ENCODE measurements at regions of chr3 and their contacts with region 1.

Region 1: DNA sequence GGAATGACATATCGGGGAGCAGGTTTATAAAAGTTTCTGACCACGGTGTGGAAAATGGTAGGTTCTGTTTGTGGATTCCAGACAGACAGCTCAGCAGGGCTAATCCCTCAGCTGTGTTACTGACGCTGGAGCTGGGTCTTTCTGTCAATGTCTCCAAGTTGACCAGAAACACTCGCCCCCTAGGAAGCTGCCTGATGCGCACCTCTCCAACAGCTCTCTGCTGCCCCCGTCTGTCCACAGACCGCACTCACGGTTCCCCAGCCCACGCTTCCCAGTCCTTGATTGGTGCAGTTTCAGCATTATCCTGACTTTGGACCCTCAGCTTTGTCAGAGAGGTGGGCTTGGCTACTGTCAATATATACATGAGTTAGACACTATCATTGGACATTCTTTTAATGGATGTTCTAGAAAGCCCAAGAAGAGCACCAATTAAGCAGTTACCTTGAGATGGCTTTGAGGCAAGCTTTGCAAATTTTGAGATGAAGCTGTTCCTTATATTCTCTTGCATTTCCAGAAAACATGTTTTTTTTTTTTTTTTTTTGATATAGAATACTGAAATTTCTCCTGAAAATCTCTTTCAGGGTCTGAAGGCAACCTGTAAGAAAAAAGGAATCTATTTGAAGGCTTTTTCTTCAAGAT is 98.9 kb upstream of the TBC1D5 start:
- DNase-seq: peak; percentile 82
- H3K4me3 Mint-ChIP-seq: no peak overlapping the region
- H3K27ac Mint-ChIP-seq: no peak overlapping the region
- H3K4me1 Mint-ChIP-seq: no peaks in the 10 kb centered on the region
- H3K27me3 Mint-ChIP-seq: peaks cover 4% of the 10 kb centered on the region

Region 2: GRCh38 chr3:16600780-16601539 is 1240.3 kb before region 1 on chr3:
- CTCF ChIA-PET with region 1: interaction called, 8 read pairs
- POLR2A ChIA-PET with region 1: no interaction called
- intact Hi-C with region 1: loop called (anchors 10 kb)
- DNase-seq: peak; percentile 81
- H3K4me3 Mint-ChIP-seq: no peak overlapping the region
- H3K27ac Mint-ChIP-seq: no peak overlapping the region
- H3K4me1 Mint-ChIP-seq: peaks cover 24% of the 10 kb centered on the region
- H3K27me3 Mint-ChIP-seq: peaks cover 10% of the 10 kb centered on the region

Region 3: DNA sequence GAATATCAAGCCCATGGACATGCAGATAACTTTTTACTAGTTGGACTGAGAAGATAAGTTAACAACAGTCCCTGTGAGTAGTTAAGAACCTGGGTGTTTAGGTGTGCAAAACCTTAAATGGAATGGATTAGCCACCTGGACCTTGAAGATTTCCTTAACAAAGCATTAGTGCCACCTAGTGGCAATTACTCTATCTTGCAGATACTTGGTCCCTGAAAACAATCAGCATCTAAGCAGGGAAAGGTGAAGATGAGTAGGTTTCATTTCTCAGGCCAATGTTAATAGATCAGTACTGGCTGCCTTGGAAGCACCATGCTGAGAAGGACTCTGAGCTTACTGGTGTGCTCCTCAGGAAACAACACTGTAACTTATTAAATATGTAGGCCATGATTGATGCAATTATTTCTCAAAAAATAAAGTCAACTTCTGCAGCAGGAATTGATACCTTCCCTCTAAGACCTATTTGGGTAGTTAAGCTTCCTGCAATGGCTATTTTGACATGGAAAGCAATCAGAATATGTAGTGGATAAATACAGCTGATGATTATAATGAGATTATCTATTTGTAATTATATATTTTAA is 428.3 kb before region 1 on chr3:
- CTCF ChIA-PET with region 1: interaction called, 11 read pairs
- POLR2A ChIA-PET with region 1: no interaction called
- intact Hi-C with region 1: no loop called
- DNase-seq: no peak
- H3K4me3 Mint-ChIP-seq: no peak overlapping the region
- H3K27ac Mint-ChIP-seq: no peak overlapping the region
- H3K4me1 Mint-ChIP-seq: no peaks in the 10 kb centered on the region
- H3K27me3 Mint-ChIP-seq: no peaks in the 10 kb centered on the region

Region 4: GRCh38 chr3:17431004-17431403 is 410.3 kb before region 1 on chr3:
- CTCF ChIA-PET with region 1: interaction called, 25 read pairs
- POLR2A ChIA-PET with region 1: no interaction called
- intact Hi-C with region 1: loop called (anchors 2 kb)
- DNase-seq: no peak
- H3K4me3 Mint-ChIP-seq: no peak overlapping the region
- H3K27ac Mint-ChIP-seq: no peak overlapping the region
- H3K4me1 Mint-ChIP-seq: no peaks in the 10 kb centered on the region
- H3K27me3 Mint-ChIP-seq: no peaks in the 10 kb centered on the region

Region 5: DNA sequence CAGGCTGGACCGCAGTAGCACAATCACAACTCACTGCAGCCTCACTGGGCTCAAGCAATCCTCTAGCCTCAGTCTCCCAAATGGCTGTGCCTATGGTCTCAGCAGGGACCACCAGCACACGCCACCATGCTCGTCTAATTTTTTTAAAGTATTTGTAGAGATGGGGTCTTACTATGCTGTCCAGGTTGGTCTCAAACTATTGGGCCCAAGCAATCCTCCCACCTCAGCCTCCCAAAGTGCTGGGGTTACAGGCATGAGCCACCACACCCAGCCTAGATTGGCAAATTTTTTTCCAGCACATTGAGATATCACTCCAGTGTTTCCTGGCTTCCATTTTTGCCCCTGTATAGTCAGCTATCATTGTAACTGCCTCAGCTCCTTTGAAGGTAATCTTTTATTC is 117.2 kb before region 1 on chr3:
- CTCF ChIA-PET with region 1: no interaction called
- POLR2A ChIA-PET with region 1: no interaction called
- intact Hi-C with region 1: no loop called
- DNase-seq: no peak
- H3K4me3 Mint-ChIP-seq: no peak overlapping the region
- H3K27ac Mint-ChIP-seq: no peak overlapping the region
- H3K4me1 Mint-ChIP-seq: no peaks in the 10 kb centered on the region
- H3K27me3 Mint-ChIP-seq: no peaks in the 10 kb centered on the region

Region 6: GRCh38 chr3:17742108-17742879 is 99.0 kb before region 1 on chr3 and contains the start of gene TBC1D5:
- CTCF ChIA-PET with region 1: interaction called, 14 read pairs
- POLR2A ChIA-PET with region 1: no interaction called
- intact Hi-C with region 1: loop called (anchors 2 kb)
- DNase-seq: peak; percentile 96
- H3K4me3 Mint-ChIP-seq: peak within 1 kb of the TSS; percentile 94
- H3K27ac Mint-ChIP-seq: peak within 1 kb of the TSS; percentile 97
- H3K4me1 Mint-ChIP-seq: peaks cover 36% of the 10 kb centered on the region
- H3K27me3 Mint-ChIP-seq: no peaks in the 10 kb centered on the region
- total RNA-seq, gene TBC1D5: 49.2 to 53.7 TPM

Region 7: GRCh38 chr3:17775073-17775472 is 66.2 kb before region 1 on chr3:
- CTCF ChIA-PET with region 1: no interaction called
- POLR2A ChIA-PET with region 1: no interaction called
- intact Hi-C with region 1: no loop called
- DNase-seq: peak; percentile 41
- H3K4me3 Mint-ChIP-seq: peak overlapping the region; percentile 67
- H3K27ac Mint-ChIP-seq: peak overlapping the region; percentile 75
- H3K4me1 Mint-ChIP-seq: peaks cover 14% of the 10 kb centered on the region
- H3K27me3 Mint-ChIP-seq: peaks cover 9% of the 10 kb centered on the region

Region 8: GRCh38 chr3:18047052-18047451 is 205.7 kb after region 1 on chr3:
- CTCF ChIA-PET with region 1: no interaction called
- POLR2A ChIA-PET with region 1: no interaction called
- intact Hi-C with region 1: no loop called
- DNase-seq: no peak
- H3K4me3 Mint-ChIP-seq: no peak overlapping the region
- H3K27ac Mint-ChIP-seq: no peak overlapping the region
- H3K4me1 Mint-ChIP-seq: no peaks in the 10 kb centered on the region
- H3K27me3 Mint-ChIP-seq: peaks cover under 1% of the 10 kb centered on the region

Region 9: DNA sequence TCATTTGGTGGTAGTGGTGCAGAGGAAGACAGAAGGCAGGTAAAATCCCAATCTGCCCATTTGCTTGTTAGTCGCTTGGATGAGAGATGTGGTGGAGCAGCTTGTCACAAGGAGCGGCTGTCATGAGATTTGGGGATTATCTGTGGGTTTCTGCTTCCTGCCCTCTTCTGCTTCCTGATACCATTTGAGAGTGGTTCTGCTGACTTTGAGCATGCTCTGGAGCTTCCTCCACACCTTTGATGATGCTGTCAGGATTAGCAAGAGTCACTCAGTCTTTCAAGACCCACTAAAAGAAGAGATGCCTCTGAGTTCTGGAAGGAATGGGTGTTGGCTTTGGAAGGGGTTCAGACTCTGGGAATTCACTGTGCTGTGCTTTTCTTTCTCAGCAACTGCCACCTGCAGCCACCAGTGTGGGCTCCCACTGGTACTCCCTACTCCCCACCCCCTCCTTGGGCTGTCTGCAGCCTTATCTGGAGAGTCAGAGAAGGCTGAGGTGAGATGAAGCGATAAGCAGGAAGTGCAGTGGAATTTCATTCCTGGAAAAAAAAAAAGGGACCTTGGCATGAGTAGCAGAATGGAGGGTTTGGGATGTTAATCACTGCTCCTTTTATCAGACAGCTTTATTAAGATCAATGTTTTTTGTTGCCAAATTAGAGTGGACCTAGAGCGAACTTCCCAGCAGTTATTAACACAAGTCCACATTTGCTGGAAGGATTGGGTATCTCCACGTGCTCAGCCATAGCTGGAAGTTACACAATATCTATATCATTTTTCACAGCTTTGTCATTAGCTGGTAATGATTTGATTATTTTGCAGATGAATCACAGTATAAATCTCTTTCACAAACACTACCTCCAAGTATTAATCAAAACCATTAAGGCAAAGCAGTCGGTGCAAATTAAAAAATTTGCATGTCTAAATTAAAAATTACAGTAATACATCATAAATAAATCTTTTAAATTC is 816.8 kb after region 1 on chr3:
- CTCF ChIA-PET with region 1: no interaction called
- POLR2A ChIA-PET with region 1: no interaction called
- intact Hi-C with region 1: no loop called
- DNase-seq: peak; percentile 59
- H3K4me3 Mint-ChIP-seq: peak overlapping the region; percentile 67
- H3K27ac Mint-ChIP-seq: peak overlapping the region; percentile 78
- H3K4me1 Mint-ChIP-seq: peaks cover 78% of the 10 kb centered on the region
- H3K27me3 Mint-ChIP-seq: no peaks in the 10 kb centered on the region

Measured in activated CD4-positive, alpha-beta memory T cell treated with anti-CD3 and anti-CD28 coated beads for 36 hours (primary cell).